CD4-positive, alpha-beta memory T cell (primary cell): ENCODE measurements at regions of chr15 and their contacts with region 1.

Region 1: DNA sequence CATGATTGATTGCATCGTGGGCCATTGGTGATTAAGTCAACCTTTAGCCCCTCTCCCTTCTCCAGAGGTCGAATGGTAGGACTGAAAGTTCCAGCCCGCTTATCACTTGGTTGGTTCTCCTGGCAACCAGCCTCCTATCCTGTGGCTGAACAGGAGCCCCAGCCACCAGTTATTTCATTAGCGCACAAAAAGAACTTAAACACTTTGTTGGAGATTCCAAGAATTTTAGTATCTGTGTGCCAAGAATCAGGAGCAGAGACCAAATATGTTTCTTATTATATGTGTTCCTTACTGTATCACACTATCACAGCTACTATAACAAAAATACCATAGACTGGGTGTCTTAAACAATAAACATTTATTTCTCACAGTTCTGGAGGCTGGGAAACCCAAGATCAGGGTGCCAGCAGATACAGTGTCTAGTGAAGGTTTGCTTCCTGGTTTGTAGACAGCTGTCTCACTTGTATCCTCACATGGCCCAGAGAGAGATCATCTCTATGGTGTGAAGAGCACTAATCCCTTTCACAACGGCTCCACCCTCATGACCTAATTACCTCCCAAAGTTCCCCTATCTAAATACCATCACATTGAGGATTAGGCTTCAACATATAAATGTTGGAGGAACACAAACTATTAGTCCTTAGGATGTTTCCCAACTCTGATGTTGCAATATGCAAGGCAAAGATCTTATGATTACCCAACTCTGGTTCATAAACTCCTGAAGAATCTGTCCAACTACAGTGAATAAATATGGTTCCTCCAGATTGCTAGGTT is 30.5 kb upstream of the APH1B start:
- DNase-seq: no peak
- H3K4me3 ChIP-seq: no peak overlapping the region
- H3K4me3 Mint-ChIP-seq: peak overlapping the region in 1 of 8 donors; percentile 25
- H3K27ac ChIP-seq: no peak overlapping the region
- H3K27ac Mint-ChIP-seq: peak overlapping the region in 6 of 7 donors; percentile 22 to 73 (median 63)
- H3K4me1 ChIP-seq: peaks cover 26% of the 10 kb centered on the region
- H3K4me1 Mint-ChIP-seq: peaks cover 36 to 67% (median 48%) of the 10 kb centered on the region in 4 donors
- H3K27me3 ChIP-seq: no peaks in the 10 kb centered on the region
- H3K27me3 Mint-ChIP-seq: no peaks in the 10 kb centered on the region

Region 2: DNA sequence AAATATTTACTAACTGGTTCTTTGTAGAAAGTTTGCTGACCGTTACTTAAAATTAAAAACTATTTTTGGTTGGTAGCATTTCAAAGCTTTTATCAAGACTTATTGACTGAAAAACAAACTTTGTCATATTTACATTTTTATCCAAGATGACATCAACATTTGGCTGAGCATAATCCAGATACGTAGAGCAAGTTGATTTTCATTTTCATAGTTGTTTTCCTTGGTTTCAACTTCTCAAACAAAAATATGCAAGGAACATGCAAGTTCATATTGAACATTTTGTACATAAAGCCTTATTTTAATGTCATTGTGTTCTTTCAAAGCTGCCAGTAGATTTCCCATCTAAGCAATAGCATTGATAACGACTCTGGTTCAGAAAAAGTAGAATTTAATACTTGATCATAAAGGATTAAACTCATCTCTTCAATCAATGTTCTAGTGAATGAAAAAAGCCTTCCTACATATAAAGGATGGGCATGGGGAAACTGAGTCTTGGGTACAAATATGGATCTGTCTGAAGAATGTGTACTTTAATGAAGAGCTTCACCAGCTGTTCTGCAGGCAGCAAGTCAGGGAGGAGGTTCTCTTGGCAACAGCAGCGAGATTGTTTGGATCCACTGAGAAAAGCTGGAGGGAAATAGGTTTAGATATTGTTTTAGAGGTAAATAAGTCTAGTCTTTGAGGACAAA is 51.9 kb before region 1 on chr15:
- CTCF ChIA-PET with region 1: interaction called, 10 read pairs
- POLR2A ChIA-PET with region 1: interaction called, 21 read pairs
- intact Hi-C with region 1: loop called (anchors 2 kb)
- DNase-seq: no peak
- H3K4me3 ChIP-seq: no peak overlapping the region
- H3K4me3 Mint-ChIP-seq: peak overlapping the region; percentile 41 to 91 (median 72)
- H3K27ac ChIP-seq: peak overlapping the region; percentile 93
- H3K27ac Mint-ChIP-seq: peak overlapping the region; percentile 87 to 96 (median 92)
- H3K4me1 ChIP-seq: peaks cover 94% of the 10 kb centered on the region
- H3K4me1 Mint-ChIP-seq: peaks cover 69 to 95% (median 85%) of the 10 kb centered on the region in 4 donors
- H3K27me3 ChIP-seq: no peaks in the 10 kb centered on the region
- H3K27me3 Mint-ChIP-seq: no peaks in the 10 kb centered on the region

Region 3: GRCh38 chr15:63233667-63234423 is 13.0 kb before region 1 on chr15:
- CTCF ChIA-PET with region 1: interaction called, 10 read pairs
- POLR2A ChIA-PET with region 1: interaction called, 7 read pairs
- intact Hi-C with region 1: no loop called
- DNase-seq: no peak
- H3K4me3 ChIP-seq: no peak overlapping the region
- H3K4me3 Mint-ChIP-seq: peak overlapping the region in 3 of 8 donors; percentile 7 to 52 (median 38)
- H3K27ac ChIP-seq: no peak overlapping the region
- H3K27ac Mint-ChIP-seq: peak overlapping the region in 6 of 7 donors; percentile 42 to 90 (median 82)
- H3K4me1 ChIP-seq: peaks cover 78% of the 10 kb centered on the region
- H3K4me1 Mint-ChIP-seq: peaks cover 53 to 79% (median 63%) of the 10 kb centered on the region in 4 donors
- H3K27me3 ChIP-seq: no peaks in the 10 kb centered on the region
- H3K27me3 Mint-ChIP-seq: no peaks in the 10 kb centered on the region